Left ventricle myocardium superior (tissue), 1 donor: ENCODE measurements at regions of chr3 and their contacts with region 1.

Region 1: GRCh38 chr3:32374788-32375595 is 16.7 kb upstream of the CMTM7 start:
- DNase-seq: no peak
- ATAC-seq: peak; percentile 65

Region 2: GRCh38 chr3:32004113-32004765 is 370.8 kb before region 1 on chr3:
- intact Hi-C with region 1: no loop called
- DNase-seq: no peak
- ATAC-seq: peak; percentile 55

Region 3: DNA sequence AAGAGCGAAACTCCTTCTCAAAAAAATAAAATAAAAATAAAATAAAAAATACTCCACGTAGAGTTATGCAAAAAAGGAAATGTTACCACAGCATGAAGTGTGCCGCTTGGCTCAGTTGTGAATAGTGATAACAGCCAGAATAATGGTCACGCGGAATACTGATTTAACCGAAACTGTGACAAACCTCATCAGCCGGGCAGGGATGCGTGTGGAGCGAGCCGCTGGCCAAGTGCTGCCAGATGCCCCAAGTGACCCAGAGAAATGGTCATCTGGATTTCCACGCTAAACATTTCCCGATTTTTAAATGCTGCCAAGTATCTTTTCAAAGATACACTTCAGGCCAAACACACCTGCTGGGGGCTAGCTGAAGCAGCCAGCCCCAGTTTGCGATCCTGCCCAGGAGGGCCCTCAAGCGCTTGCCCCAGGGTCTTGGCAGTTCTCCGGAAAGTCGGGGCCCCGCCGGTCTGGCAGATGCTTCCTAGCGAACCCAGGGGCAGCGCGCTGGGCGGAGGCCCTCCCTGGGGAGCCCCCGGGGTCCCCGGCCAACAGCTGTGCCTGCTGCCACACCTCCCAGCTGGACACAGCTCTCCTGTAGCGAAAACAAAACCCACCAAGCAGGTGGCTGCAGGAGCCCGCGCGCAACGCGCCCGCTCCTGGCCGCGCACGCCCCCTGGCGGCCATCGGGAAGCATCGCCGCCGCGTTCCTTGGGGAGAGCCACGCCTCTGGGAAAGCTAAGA is 92.5 kb after region 1 on chr3:
- intact Hi-C with region 1: loop called (anchors 10 kb)
- DNase-seq: peak; percentile 84
- ATAC-seq: peak; percentile 94

Region 4: DNA sequence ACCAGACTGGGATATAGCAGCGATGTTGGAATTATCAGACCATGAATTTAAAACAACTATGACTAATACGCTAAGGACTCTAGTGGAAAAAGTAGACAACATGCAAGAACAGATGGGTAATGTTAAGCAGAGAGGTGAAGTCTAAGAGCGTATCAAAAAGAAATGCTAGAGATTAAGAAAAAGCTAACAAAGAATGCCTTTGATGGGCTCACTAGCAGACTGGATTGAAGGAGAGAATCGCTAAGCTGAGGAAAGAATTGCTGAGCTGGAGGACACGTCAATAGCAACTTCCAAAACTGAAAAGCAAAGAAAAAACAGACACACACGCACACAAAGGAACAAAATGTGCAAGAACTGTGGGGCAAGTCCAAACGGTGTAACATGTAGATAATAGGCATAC is 147.7 kb after region 1 on chr3:
- intact Hi-C with region 1: no loop called
- DNase-seq: no peak
- ATAC-seq: peak; percentile 44

Region 5: GRCh38 chr3:32842531-32842931 is 467.5 kb after region 1 on chr3:
- intact Hi-C with region 1: no loop called
- DNase-seq: no peak
- ATAC-seq: no peak